BJ (cell line): ENCODE measurements at regions of chr6 and their contacts with region 1.

Region 1: GRCh38 chr6:150567823-150568383 is 31.8 kb upstream of the PLEKHG1 start:
- DNase-seq: no peak
- H3K4me3 ChIP-seq: no peak overlapping the region
- H3K27me3 ChIP-seq: no peaks in the 10 kb centered on the region; the same call in 1 of the 2 replicates
- CTCF ChIP-seq: no peak

Region 2: DNA sequence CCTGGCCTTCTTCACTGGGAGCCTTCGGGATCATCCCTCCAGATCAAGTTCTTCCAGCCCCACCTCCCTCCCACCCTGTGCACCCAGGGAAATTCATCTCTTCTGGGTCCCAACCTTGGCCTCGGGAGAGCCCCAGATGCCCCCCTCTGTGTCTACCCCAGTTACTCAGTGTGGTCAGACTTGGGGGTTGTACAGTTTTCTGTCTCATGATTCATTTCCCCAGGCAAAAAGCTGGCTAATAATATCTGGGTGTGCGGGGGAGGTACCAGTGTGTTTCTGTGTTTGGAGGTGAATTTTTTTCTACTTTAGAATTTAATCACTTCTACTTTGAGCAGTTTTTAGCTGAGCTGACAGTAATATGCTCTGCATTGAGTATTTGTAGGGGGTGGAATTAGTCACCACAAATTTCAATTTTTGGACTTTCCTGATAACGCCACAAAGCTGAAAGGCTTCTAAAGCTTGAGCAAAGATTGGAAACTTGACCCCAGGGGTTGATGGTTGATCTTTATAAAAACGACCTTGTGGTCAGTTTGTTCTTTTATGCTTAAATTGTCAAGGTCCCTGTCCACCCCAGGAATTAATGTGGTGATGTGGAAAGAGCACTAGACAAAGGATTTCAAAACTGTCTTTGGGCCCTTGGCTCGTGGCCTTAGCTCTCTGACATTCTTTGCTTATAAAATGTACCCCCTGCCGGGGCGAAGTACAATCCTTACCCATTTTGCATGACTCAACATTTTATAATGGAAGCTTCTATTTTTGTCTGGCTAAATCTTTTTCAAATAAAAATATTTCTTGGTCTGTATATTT is 1535.1 kb before region 1 on chr6:
- CTCF ChIA-PET with region 1: no interaction called
- POLR2A ChIA-PET with region 1: no interaction called
- DNase-seq: peak; percentile 64
- H3K4me3 ChIP-seq: no peak overlapping the region
- H3K27me3 ChIP-seq: no peaks in the 10 kb centered on the region
- CTCF ChIP-seq: no peak

Region 3: GRCh38 chr6:150579611-150580010 is 11.7 kb after region 1 on chr6:
- CTCF ChIA-PET with region 1: no interaction called
- POLR2A ChIA-PET with region 1: interaction called, 29 read pairs
- DNase-seq: no peak
- H3K4me3 ChIP-seq: no peak overlapping the region
- H3K27me3 ChIP-seq: no peaks in the 10 kb centered on the region
- CTCF ChIP-seq: no peak

Region 4: GRCh38 chr6:151216804-151217203 is 648.9 kb after region 1 on chr6:
- CTCF ChIA-PET with region 1: no interaction called
- POLR2A ChIA-PET with region 1: no interaction called
- DNase-seq: no peak
- H3K4me3 ChIP-seq: no peak overlapping the region
- H3K27me3 ChIP-seq: no peaks in the 10 kb centered on the region; the same call in 1 of the 2 replicates
- CTCF ChIP-seq: no peak